Endothelial cell of umbilical vein (primary cell): ENCODE measurements at regions of chr4 and their contacts with region 1.

Region 1: DNA sequence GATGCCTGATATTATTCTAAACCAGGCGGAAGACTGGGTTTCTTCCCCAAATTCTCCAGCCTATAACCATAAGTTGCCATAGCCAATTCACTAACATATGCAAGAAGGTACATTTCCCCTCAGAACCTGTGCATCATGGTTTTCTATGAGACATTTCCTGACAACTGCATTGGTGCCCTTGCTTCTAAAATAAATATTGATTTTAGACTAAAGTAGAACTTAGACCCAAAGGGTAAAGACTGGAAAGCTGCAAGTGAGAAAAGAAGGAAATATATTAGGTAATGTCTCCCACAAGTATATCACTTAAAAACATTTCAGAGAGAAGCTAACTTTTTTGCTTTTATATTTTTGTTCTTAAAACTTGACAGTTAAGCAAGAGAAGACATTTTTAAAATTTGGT is 125.1 kb downstream of the PPA2 start:
- DNase-seq: no peak
- H3K4me3 ChIP-seq: no peak overlapping the region
- H3K27ac ChIP-seq: no peak overlapping the region
- H3K4me1 ChIP-seq: no peaks in the 10 kb centered on the region
- H3K27me3 ChIP-seq: no peaks in the 10 kb centered on the region
- CTCF ChIP-seq: no peak
- POLR2A ChIP-seq: no peak

Region 2: GRCh38 chr4:105092356-105092755 is 256.4 kb before region 1 on chr4:
- CTCF ChIA-PET with region 1: no interaction called
- POLR2A ChIA-PET with region 1: no interaction called
- dilution Hi-C with region 1: no loop called
- intact Hi-C with region 1: no loop called
- DNase-seq: peak; percentile 26
- H3K4me3 ChIP-seq: no peak overlapping the region
- H3K27ac ChIP-seq: no peak overlapping the region
- H3K4me1 ChIP-seq: no peaks in the 10 kb centered on the region
- H3K27me3 ChIP-seq: no peaks in the 10 kb centered on the region
- CTCF ChIP-seq: no peak
- POLR2A ChIP-seq: no peak

Region 3: DNA sequence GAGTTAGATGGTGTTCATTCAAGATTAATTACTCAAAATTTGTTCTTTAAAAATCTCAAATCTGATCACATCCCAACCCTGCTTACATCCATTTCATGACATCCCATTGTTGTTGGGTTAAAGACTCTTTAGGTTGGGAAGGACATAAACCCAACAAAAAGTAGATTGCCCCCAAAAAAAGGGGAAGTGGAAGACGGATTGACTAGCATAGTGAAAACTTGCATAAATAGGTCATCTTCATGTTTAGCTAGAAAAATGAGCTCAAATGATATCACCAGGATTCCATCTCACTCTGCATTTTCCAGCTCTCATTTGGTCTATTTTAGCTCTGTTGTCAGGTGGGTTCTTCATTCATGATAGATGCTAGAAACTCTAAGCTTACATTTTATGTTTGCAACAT is 220.5 kb before region 1 on chr4:
- CTCF ChIA-PET with region 1: no interaction called
- POLR2A ChIA-PET with region 1: no interaction called
- dilution Hi-C with region 1: no loop called
- intact Hi-C with region 1: no loop called
- DNase-seq: no peak
- H3K4me3 ChIP-seq: no peak overlapping the region
- H3K27ac ChIP-seq: no peak overlapping the region
- H3K4me1 ChIP-seq: peaks cover 3% of the 10 kb centered on the region
- H3K27me3 ChIP-seq: no peaks in the 10 kb centered on the region
- CTCF ChIP-seq: no peak
- POLR2A ChIP-seq: no peak

Region 4: DNA sequence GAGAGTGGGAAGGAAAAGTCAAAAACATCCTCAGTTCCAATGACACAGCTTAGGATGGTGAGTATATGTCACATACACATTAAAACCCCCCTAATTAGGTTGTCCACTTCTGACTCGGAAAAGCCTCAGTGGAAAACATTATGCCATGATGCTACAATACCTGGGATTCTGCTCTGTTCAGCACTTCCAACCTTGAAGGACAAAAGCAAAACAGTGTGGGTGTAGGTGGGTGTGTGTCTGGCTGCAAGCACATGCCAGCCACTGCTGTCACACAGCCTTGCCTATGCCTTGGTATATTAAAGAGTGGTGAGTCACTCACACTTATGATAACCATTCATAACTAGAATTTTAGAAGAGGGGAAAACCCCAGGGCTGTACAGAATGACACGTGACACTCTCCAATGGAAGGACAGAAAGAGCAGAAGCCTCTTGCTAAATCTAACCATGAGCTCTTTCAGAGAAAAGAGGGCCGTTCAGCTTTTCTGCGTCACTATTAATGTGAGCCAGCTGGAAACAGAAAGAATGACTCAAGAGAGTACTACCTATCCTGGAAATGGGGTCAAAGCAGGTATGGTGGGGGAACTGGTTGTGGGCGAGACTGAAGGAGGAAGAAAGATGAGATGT is 42.4 kb before region 1 on chr4:
- CTCF ChIA-PET with region 1: no interaction called
- POLR2A ChIA-PET with region 1: no interaction called
- dilution Hi-C with region 1: no loop called
- intact Hi-C with region 1: no loop called
- DNase-seq: no peak
- H3K4me3 ChIP-seq: no peak overlapping the region
- H3K27ac ChIP-seq: no peak overlapping the region
- H3K4me1 ChIP-seq: no peaks in the 10 kb centered on the region
- H3K27me3 ChIP-seq: no peaks in the 10 kb centered on the region
- CTCF ChIP-seq: no peak
- POLR2A ChIP-seq: no peak

Region 5: GRCh38 chr4:105399532-105400161 is 50.9 kb after region 1 on chr4:
- CTCF ChIA-PET with region 1: no interaction called
- POLR2A ChIA-PET with region 1: no interaction called
- dilution Hi-C with region 1: no loop called
- intact Hi-C with region 1: loop called (anchors 1 kb)
- DNase-seq: peak; percentile 27
- H3K4me3 ChIP-seq: no peak overlapping the region
- H3K27ac ChIP-seq: no peak overlapping the region
- H3K4me1 ChIP-seq: peaks cover 2% of the 10 kb centered on the region
- H3K27me3 ChIP-seq: no peaks in the 10 kb centered on the region
- CTCF ChIP-seq: no peak
- POLR2A ChIP-seq: no peak

Region 6: GRCh38 chr4:105471566-105472176 is 123.0 kb after region 1 on chr4:
- CTCF ChIA-PET with region 1: no interaction called
- POLR2A ChIA-PET with region 1: no interaction called
- dilution Hi-C with region 1: no loop called
- intact Hi-C with region 1: no loop called
- DNase-seq: peak; percentile 81
- H3K4me3 ChIP-seq: peak overlapping the region in 1 of 3 experiments; percentile 35
- H3K27ac ChIP-seq: no peak overlapping the region
- H3K4me1 ChIP-seq: peaks cover 18% of the 10 kb centered on the region
- H3K27me3 ChIP-seq: no peaks in the 10 kb centered on the region
- CTCF ChIP-seq: peak; percentile 57 to 70
- POLR2A ChIP-seq: no peak